OCI-LY7 (cell line): ENCODE measurements at regions of chr13 and their contacts with region 1.

Region 1: DNA sequence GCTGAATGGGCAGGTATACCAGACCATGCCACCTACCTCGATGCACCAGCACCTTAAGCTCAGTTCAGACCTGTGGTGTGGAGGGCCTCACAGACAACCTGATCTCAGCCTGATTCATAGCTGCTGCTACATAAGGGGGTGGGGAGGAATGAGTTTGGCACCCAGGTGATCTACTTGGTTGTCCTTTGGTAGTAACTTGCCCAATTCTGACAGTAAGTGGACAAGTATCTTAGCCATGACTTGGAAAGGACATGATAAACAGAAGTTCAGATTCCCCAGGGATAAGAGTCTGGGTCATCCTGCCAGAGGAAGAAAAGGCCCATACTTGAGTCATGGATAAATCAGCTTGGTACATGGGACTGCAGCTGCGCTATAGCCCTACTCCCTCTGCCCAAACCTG is 28.4 kb upstream of the SOHLH2 start:
- DNase-seq: no peak
- H3K4me3 ChIP-seq: no peak overlapping the region
- H3K27ac ChIP-seq: no peak overlapping the region
- H3K4me1 ChIP-seq: no peaks in the 10 kb centered on the region
- CTCF ChIP-seq: no peak

Region 2: GRCh38 chr13:35857769-35858168 is 385.0 kb before region 1 on chr13:
- CTCF ChIA-PET with region 1: no interaction called
- POLR2A ChIA-PET with region 1: interaction called, 10 read pairs
- intact Hi-C with region 1: no loop called
- DNase-seq: no peak
- H3K4me3 ChIP-seq: no peak overlapping the region
- H3K27ac ChIP-seq: no peak overlapping the region
- H3K4me1 ChIP-seq: no peaks in the 10 kb centered on the region
- CTCF ChIP-seq: no peak